Left cardiac atrium (tissue), 4 donors: ENCODE measurements at regions of chr17 and their contacts with region 1.

Region 1: GRCh38 chr17:80866147-80866793 is 125.4 kb upstream of the CHMP6 start:
- DNase-seq: peak; percentile 70
- ATAC-seq: peak; percentile 53 to 75

Region 2: GRCh38 chr17:80008383-80008840 is 857.9 kb before region 1 on chr17:
- intact Hi-C with region 1: no loop called
- DNase-seq: peak; percentile 83
- ATAC-seq: peak; percentile 81 to 83

Region 3: DNA sequence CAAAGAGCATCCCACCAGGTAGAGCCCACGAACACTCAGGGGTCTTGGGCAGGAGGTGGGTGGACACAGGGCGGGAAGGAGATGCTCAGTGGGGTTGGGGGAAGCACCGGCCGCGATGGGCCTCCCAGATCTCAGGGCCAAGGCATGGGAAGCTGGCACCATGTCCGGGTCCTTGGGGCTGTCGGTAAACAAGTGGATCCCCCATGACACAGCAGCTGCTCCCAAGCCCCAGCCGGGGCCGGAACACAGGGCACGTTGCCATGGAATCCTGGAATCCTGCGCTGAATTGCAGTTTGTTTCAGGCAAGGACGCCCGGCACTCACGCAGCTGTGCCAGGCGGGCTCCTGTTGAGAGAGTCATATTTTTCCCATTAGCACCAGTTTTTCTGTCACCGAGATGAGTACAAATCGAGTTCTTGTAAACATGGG is 102.3 kb after region 1 on chr17:
- intact Hi-C with region 1: loop called (anchors 5 to 10 kb)
- DNase-seq: no peak
- ATAC-seq: no peak

Region 4: DNA sequence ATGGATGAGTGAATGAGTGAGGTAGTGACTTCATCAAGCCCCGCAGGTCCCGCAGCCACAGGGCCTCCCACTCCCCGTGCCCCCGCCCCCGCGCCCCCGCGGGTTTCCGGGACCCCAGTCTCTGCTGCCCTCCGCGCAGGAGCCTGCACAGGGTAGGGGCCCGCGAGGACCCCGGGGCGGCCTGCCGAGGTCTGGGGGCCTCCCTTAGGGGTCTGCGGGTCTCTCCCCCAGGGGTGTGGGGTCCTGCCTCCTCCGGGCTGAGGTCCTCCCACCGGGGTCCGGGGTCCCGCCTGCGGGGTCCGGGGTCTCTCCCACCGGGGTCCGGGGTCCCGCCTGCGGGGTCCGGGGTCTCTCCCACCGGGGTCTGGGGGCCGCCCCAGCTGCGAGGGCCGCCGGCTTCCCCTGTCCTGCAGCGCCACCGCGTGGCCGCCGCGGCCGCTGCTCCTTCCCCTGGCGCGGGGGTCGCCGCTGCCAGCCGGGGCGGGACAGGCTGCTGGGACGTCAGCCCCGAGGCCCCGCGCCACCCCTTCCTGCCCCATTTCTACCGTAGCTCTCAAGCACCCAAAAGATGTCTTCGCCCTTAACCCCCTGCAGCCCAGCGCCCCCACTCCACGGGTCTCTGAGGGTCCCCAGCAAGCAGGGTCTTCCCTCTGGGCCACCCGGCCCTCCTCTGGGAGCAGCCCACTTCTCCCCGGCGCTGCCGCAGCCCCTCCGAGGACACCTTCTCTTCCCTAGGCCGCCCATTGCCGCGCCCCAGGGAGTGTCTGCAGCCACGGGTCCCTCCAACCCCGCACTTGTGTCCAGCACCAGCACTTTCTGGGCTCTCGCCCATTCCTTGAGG is 115.0 kb after region 1 on chr17:
- intact Hi-C with region 1: loop called in 1 of 2 experiments (anchors 5 kb)
- DNase-seq: no peak
- ATAC-seq: peak; percentile 37 to 43